ENCODE measurements at regions of chr3 and their contacts with region 1.

Region 1: DNA sequence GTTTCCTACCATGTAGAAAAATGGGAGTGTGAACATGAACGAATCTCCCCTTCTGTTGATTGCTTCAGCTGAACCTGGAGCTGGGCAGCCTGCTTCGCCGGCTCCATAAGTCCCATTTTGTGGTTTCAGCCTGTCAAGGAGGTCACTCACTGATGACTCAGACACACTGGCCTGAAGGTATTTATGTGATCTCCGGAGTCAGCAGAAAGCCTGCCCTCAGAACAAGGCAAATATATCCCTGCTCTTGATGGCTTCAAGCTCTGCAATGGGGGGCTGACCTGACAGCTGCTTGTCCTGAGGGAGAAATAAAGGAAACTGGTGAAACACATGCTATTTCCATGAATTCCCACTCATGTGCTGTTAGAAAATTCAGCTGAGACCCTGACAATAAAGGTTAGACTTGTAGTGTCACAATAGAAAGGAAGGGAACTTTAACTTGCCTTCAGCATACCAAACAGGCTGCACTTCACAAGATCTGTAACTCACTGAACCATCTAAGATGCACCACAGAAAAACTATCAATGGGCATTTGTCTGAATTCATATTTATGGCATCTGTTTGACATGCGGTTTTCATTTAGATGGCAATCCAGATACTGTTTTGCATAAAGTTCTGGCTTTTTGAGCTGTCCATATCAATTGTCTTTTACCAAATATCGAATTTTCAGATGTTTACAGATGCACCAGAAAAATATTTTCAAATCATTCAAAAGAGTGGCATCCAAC is 282.0 kb upstream of the VEPH1 start:
- DNase-seq: peak; percentile 73 to 92
- H3K4me3 ChIP-seq: peak overlapping the region; percentile 7; the same call in 1 of the 2 replicates
- H3K27ac ChIP-seq: peak overlapping the region; percentile 22
- H3K4me1 ChIP-seq: peaks cover 49% of the 10 kb centered on the region
- H3K27me3 ChIP-seq: no peaks in the 10 kb centered on the region
- CTCF ChIP-seq: no peak

Region 2: GRCh38 chr3:157174649-157175498 is 610.4 kb before region 1 on chr3:
- CTCF ChIA-PET with region 1: no interaction called
- POLR2A ChIA-PET with region 1: no interaction called
- intact Hi-C with region 1: loop called (anchors 10 kb)
- DNase-seq: peak; percentile 99
- H3K4me3 ChIP-seq: peak overlapping the region; percentile 71
- H3K27ac ChIP-seq: peak overlapping the region; percentile 94
- H3K4me1 ChIP-seq: peaks cover 22% of the 10 kb centered on the region
- H3K27me3 ChIP-seq: no peaks in the 10 kb centered on the region
- CTCF ChIP-seq: no peak

Region 3: GRCh38 chr3:158167737-158168471 is 382.6 kb after region 1 on chr3:
- CTCF ChIA-PET with region 1: no interaction called
- POLR2A ChIA-PET with region 1: no interaction called
- intact Hi-C with region 1: loop called (anchors 5 kb)
- DNase-seq: peak; percentile 38 to 92
- H3K4me3 ChIP-seq: no peak overlapping the region
- H3K27ac ChIP-seq: peak overlapping the region; percentile 64
- H3K4me1 ChIP-seq: peaks cover 21% of the 10 kb centered on the region
- H3K27me3 ChIP-seq: no peaks in the 10 kb centered on the region
- CTCF ChIP-seq: no peak

Region 4: GRCh38 chr3:158279609-158280008 is 494.3 kb after region 1 on chr3:
- CTCF ChIA-PET with region 1: no interaction called
- POLR2A ChIA-PET with region 1: no interaction called
- intact Hi-C with region 1: no loop called
- DNase-seq: no peak
- H3K4me3 ChIP-seq: no peak overlapping the region
- H3K27ac ChIP-seq: no peak overlapping the region
- H3K4me1 ChIP-seq: no peaks in the 10 kb centered on the region
- H3K27me3 ChIP-seq: no peaks in the 10 kb centered on the region
- CTCF ChIP-seq: no peak